ENCODE measurements at regions of chr11 and their contacts with region 1.

Region 1: DNA sequence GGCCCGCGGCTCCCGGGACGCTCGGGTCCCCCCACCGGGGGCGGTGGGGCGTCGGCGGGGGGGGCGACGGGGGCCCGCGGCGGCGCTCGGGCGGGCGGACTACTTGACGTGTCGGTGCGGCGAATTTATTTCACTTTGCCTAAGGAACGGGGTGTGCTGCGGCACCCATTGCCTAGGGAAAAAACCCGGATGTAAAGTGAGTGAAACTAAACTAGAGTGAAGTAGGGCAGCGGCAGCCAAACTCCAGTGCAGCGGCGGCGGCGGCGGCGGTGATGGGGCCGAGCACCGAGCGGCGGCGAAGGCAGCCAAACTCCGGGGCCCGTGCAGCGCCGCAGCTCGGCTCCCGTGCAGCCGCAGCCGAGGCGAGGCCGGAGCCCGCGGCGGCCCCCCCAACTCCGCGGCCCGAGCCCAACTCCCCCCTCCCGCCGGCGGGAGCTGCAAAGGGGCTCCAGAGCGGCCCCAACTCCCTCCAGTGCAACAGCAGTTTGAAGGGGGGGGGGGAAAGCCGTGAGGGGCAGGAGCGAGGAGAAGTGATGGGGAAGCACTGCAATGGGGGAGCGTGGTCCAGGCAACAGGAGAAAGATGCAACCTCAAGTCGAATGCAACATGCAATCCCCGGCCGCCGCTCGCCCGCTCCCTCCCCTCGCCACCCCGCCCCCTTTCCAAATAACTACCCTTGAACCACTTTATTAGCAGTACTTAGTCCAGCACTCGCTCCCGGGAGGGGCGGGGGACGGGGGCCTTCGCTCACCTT is 647 bp upstream of the PHF21A start:
- DNase-seq: peak; percentile 88
- H3K4me3 Mint-ChIP-seq: peak overlapping the region; percentile 94
- H3K27ac Mint-ChIP-seq: no peak overlapping the region
- H3K4me1 Mint-ChIP-seq: peaks cover 23% of the 10 kb centered on the region
- H3K27me3 Mint-ChIP-seq: no peaks in the 10 kb centered on the region
- CTCF ChIP-seq: no peak

Region 2: DNA sequence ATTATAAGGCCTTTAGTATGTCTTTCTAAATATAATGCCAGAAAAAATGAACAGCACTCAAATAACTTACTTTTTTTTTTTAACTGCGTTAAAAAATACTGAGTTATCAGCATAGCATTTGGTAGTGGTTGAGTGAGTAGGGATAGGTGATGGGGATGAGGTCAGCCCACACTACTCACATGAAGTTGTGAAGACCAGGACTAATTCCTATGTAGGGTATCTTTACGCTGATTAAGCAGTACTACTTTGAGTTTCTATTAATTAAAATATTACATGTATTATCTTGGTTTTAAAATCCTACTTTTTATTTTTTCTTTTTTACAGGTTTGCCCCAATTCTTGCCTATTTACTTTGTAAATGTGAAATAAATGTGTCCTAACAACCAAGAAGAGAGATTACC is 14.1 kb before region 1 on chr11:
- CTCF ChIA-PET with region 1: interaction called, 9 read pairs
- POLR2A ChIA-PET with region 1: interaction called, 16 read pairs
- intact Hi-C with region 1: no loop called
- DNase-seq: no peak
- H3K4me3 Mint-ChIP-seq: no peak overlapping the region
- H3K27ac Mint-ChIP-seq: no peak overlapping the region
- H3K4me1 Mint-ChIP-seq: peaks cover 9% of the 10 kb centered on the region
- H3K27me3 Mint-ChIP-seq: no peaks in the 10 kb centered on the region
- CTCF ChIP-seq: no peak

Region 3: GRCh38 chr11:46160100-46160499 is 38.2 kb after region 1 on chr11:
- CTCF ChIA-PET with region 1: interaction called, 5 read pairs
- POLR2A ChIA-PET with region 1: interaction called, 10 read pairs
- intact Hi-C with region 1: no loop called
- DNase-seq: peak; percentile 12
- H3K4me3 Mint-ChIP-seq: no peak overlapping the region
- H3K27ac Mint-ChIP-seq: peak overlapping the region; percentile 28
- H3K4me1 Mint-ChIP-seq: peaks cover 19% of the 10 kb centered on the region
- H3K27me3 Mint-ChIP-seq: no peaks in the 10 kb centered on the region
- CTCF ChIP-seq: no peak

Measured in MCF 10A (cell line).